ENCODE measurements at regions of chr5 and their contacts with region 1.

Region 1: GRCh38 chr5:99032234-99033013 is 103.6 kb upstream of the CHD1 start:
- DNase-seq: peak in 6 of 10 donors; percentile 21 to 85 (median 61)

Region 2: DNA sequence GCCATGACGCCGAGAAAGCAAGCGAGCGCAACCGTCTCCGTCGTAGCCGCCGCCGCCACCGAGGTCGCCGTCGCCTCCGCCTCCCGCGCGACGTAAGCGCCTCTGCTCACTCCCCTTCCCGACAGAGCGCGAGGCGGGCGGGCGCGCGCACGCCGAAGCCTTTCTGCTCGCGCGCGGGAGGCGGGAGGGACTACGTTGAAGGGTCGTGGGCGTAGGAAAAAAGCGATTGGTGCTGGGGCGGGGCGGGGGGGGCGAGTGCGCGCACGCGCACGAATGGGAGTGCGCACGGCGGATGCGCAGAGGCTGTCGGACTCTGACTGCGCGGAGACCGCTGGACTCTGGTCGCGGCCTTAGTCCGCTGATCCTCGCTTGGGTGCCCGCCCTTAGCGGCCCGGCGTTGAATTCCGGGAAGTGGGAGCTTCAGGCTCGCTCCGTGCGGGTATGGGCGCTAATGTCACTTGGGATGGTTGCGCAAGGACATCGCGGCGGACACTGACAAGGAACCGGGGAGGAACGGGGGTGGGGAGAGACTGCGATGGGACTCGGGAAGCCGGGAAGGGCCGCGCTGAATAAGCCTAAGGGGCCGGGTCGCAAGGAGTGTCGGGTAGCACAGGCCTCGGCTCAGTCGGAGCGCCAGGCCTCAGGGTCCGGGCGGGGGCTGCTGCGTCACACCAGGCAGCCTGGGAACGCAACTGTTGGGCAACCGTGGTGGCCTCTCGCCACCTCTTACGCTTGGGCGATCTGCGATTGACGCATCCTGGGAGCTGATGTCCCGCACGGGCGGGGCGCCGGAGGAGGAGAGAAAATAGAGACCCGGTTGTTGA is 103.3 kb before region 1 on chr5 and contains the start of gene CHD1:
- intact Hi-C with region 1: loop called (anchors 5 kb)
- DNase-seq: peak; percentile 86 to 99 (median 92)

Region 3: GRCh38 chr5:99553211-99553810 is 520.9 kb after region 1 on chr5:
- intact Hi-C with region 1: no loop called
- DNase-seq: no peak

Region 4: GRCh38 chr5:99646011-99646647 is 613.7 kb after region 1 on chr5:
- intact Hi-C with region 1: no loop called
- DNase-seq: peak in 1 of 10 donors; percentile 37

Measured in posterior cingulate gyrus (tissue), 11 donors.